ENCODE measurements at regions of chr15 and their contacts with region 1.

Region 1: DNA sequence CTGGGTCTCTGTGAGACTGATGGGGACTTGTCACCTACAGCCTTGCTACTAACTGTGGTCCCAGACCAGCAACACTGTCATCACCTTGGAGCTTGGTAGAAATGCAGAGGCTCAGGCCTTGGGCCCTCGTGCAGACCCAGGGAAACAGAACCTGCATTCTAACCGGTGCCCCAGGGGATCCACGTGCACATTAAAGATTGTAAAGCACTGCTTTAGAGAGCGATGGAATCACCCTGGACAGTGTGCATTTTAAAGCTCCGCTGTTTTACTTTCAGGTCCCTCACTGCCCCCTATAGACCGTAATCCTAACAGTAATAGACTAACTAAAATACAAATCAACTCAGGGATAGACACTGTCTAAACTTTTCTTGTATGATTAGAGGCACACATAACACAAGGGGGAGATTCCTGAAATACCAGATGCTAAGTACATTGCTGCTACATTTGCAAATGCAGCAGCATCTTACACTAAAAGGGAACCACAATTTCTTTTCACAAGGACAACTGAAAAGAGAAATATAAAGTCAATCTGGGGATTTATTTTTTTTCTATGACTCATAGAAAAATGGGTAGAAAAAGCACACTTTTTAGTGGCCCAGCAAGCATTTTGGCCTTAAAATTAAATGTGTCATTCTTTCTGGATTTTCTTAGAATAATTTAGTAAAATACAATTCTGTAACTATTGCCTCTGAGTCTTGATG is 10.5 kb upstream of the SH3GL3 start:
- DNase-seq: peak; percentile 66
- H3K27ac ChIP-seq: no peak overlapping the region
- CTCF ChIP-seq: peak; percentile 73

Region 2: GRCh38 chr15:83248151-83249029 is 188.2 kb before region 1 on chr15:
- CTCF ChIA-PET with region 1: interaction called, 67 read pairs
- POLR2A ChIA-PET with region 1: interaction called, 4 read pairs
- DNase-seq: peak; percentile 39
- H3K27ac ChIP-seq: no peak overlapping the region
- CTCF ChIP-seq: peak; percentile 97

Measured in RWPE1 (cell line).